ENCODE measurements at regions of chr1 and their contacts with region 1.

Region 1: DNA sequence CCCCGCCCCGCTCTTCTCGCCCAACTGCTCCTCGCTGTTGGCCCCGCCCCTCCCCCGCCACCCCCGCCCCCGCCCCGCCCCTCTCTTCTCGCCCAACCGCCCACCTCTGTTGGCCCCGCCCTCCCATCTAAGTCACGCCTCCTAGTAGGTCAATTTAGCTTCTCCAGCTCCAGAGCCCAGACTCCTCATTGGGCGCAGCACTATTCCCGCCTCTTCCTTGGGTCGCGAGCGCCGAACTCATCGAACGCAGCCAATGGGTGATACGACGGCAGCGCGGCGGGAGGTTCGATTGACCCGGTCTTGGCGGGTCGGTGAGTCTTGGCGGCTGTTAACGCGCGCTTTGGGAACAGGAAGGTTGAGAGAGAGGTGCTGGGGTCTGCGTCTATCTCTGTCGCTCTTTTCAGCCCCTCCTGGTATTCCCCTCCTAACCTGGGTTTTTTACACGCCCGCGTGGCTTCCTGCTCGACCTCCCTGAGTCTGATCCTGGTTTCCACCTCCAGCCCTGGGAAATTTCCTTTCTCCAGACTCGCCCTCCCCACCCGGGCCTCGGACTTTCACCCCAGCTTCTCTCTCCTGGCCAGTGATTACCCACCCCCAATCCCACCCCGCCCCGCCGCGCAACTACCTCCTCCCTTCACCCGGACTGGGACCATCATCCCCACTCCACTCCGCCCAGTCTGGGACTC is at the start of gene RAD54L:
- DNase-seq: peak; percentile 95

Region 2: GRCh38 chr1:46158312-46159281 is 89.0 kb before region 1 on chr1:
- CTCF ChIA-PET with region 1: no interaction called
- POLR2A ChIA-PET with region 1: no interaction called
- DNase-seq: no peak

Region 3: GRCh38 chr1:46183088-46183842 is 64.3 kb before region 1 on chr1:
- CTCF ChIA-PET with region 1: interaction called, 10 read pairs
- POLR2A ChIA-PET with region 1: interaction called, 3 read pairs
- DNase-seq: no peak

Region 4: GRCh38 chr1:46203738-46204405 is 43.7 kb before region 1 on chr1:
- CTCF ChIA-PET with region 1: interaction called, 5 read pairs
- POLR2A ChIA-PET with region 1: interaction called, 13 read pairs
- DNase-seq: no peak

Region 5: GRCh38 chr1:46223472-46223943 is 24.1 kb before region 1 on chr1:
- CTCF ChIA-PET with region 1: interaction called, 10 read pairs
- POLR2A ChIA-PET with region 1: interaction called, 15 read pairs
- DNase-seq: peak; percentile 71

Region 6: GRCh38 chr1:46262508-46262907 is 14.9 kb after region 1 on chr1:
- CTCF ChIA-PET with region 1: interaction called, 3 read pairs
- POLR2A ChIA-PET with region 1: interaction called, 20 read pairs
- DNase-seq: no peak

Region 7: GRCh38 chr1:46333300-46334029 is 85.9 kb after region 1 on chr1:
- CTCF ChIA-PET with region 1: no interaction called
- POLR2A ChIA-PET with region 1: interaction called, 10 read pairs
- DNase-seq: peak; percentile 60

Region 8: DNA sequence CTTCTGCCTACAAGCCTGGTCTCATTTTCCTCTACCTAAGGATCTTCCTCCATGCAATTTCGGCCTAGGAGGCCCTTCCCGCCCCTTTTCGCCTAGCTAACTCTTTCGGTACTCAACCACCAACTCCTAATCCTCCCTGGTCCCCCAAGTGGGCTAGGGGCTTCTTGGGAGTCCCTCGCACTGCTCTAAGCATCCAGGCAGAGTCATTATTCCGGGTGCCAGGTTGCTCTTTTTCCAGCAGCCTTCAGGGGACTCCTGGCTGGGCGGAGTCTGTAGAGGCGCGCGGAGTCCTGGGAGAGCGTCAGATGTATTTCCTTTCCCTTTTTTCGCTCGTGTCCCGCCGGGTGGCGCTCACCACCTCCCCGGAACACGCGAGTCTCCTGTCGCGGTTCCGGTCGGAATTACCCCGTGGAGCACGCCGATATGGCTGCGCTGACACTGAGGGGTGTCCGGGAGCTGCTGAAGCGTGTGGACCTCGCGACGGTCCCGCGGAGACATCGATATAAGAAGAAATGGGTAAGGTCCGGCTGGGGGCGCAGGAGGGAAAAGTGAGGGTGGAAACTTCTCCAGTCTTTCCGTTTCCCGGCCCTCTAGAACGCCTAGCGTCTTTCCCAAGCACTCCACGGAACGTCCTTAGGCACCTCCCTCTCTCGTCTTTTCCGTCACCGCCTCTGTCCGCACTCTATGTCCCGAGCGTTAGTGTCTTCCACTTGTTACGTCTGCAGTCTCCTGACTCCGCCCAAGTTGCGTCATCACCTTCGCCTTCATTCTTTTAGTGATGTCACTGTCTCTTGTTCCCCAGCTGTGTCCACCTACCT is 93.0 kb after region 1 on chr1 and contains the start of gene NSUN4:
- CTCF ChIA-PET with region 1: interaction called, 3 read pairs
- POLR2A ChIA-PET with region 1: interaction called, 16 read pairs
- DNase-seq: peak; percentile 82

Region 9: GRCh38 chr1:46413596-46413985 is 166.0 kb after region 1 on chr1:
- CTCF ChIA-PET with region 1: no interaction called
- POLR2A ChIA-PET with region 1: no interaction called
- DNase-seq: peak; percentile 50